ENCODE measurements at regions of chr1 and their contacts with region 1.

Region 1: DNA sequence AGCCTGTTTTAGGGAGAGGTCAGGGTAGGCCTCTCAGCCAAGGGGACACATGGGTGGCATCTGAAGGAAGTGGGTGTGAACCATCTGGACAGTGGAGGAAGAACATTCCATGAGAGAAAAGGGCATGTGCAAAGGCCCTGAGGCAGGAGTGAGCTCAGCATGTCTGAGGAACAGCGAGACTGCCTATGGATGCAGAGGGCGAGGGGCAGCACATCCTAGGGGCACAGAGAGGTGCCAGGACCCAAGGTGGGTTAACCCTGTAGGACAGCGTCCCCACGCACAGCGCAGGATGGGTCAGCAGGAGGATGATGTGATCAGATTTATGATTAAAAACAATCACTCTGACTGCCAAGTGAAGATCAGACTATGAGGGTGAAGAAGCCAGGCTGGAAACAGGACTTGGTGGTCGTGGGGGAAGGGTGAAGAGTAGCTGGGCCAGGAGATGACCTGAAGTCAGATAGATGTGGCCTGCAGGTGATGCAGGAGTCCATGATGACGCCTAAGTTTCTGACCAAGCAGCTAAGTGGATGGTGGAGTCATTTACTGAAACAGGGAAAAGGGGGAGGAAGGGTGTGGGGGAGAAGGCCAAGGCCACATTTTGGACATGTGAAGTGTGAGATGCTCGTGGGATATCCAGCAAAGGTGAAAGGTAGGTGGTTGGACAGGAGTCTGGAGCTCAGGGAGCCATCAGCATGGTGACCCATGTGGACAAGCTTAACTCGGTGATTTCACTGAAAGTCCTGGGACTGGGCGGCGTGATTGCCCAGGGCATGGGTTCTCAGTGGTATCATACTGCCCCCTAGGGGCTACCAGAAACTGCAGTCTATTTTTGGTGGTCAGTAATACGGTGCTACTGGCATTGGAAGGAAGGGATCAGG is 37.8 kb downstream of the PABPC4 start:
- DNase-seq: peak; percentile 49
- ATAC-seq: peak; percentile 99
- H3K4me3 ChIP-seq: no peak overlapping the region
- H3K27ac ChIP-seq: no peak overlapping the region
- H3K4me1 ChIP-seq: peaks cover 0 to 3% of the 10 kb centered on the region in 2 experiments; a peak in 2 of 4 replicates
- H3K27me3 ChIP-seq: no peaks in the 10 kb centered on the region
- CTCF ChIP-seq: peak; percentile 83 to 94 (median 91)
- POLR2A ChIP-seq: no peak
- RAD21 ChIP-seq: peak; percentile 98

Region 2: DNA sequence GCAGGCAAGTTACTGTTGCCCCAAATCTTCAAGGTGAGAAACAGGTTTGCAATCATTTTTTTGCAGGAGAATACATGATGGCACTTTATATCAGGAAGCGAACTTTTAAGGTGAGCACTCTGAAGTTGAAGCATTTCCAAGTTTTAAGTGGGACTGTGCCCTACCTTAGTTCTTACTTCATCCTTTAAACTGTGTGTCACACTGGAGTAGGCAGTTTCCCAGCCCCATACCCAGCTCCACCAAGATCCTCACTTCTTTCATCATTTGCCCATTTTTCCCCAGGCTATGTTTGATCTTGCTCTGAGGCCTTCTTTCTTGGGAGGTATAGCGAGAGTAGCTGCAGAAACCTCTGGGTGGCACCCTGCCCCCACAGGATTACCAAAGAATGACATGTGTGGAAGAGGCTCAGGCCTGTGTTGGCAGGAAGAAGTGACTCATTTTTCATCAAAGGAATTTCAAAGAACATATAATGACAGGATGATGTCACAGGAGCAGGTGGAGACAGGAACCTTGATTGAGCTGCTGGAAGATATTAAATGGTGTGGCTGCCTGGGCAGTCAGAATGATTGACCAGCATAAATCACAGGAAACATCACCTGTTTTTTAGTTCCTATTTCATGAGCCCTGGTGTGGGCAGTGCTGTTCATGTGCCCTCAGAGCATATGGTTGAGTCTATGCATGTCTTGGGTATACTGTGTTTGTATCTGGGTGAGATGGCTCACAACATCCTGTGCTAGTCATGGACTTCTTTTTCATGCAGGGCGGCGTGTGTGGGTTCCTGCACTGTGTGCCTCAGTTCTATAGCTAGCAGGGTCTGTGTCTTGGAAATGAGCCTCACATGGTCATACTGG is 355.1 kb before region 1 on chr1:
- CTCF ChIA-PET with region 1: interaction called, 5 read pairs
- POLR2A ChIA-PET with region 1: no interaction called
- RAD21 ChIA-PET with region 1: interaction called in 1 of 2 experiments, 5 read pairs
- intact Hi-C with region 1: loop called (anchors 5 kb)
- DNase-seq: peak; percentile 96
- ATAC-seq: peak; percentile 91
- H3K4me3 ChIP-seq: peak overlapping the region in 1 of 2 experiments; percentile 18; a peak in 2 of 4 replicates
- H3K27ac ChIP-seq: peak overlapping the region; percentile 55
- H3K4me1 ChIP-seq: peaks cover 48 to 63% of the 10 kb centered on the region in 2 experiments
- H3K27me3 ChIP-seq: no peaks in the 10 kb centered on the region
- CTCF ChIP-seq: peak; percentile 42 to 66 (median 59); a peak in 5 of 6 replicates
- POLR2A ChIP-seq: no peak
- RAD21 ChIP-seq: peak; percentile 80

Region 3: GRCh38 chr1:39258146-39258924 is 280.5 kb before region 1 on chr1:
- CTCF ChIA-PET with region 1: interaction called, 15 read pairs
- POLR2A ChIA-PET with region 1: no interaction called
- RAD21 ChIA-PET with region 1: no interaction called
- intact Hi-C with region 1: loop called (anchors 2 kb)
- DNase-seq: peak; percentile 55
- ATAC-seq: peak; percentile 90
- H3K4me3 ChIP-seq: no peak overlapping the region
- H3K27ac ChIP-seq: no peak overlapping the region
- H3K4me1 ChIP-seq: peaks cover 0 to 3% of the 10 kb centered on the region in 2 experiments; a peak in 1 of 4 replicates
- H3K27me3 ChIP-seq: no peaks in the 10 kb centered on the region
- CTCF ChIP-seq: peak; percentile 84 to 92 (median 92)
- POLR2A ChIP-seq: no peak
- RAD21 ChIP-seq: peak; percentile 98

Region 4: GRCh38 chr1:39268112-39268581 is 270.7 kb before region 1 on chr1:
- CTCF ChIA-PET with region 1: interaction called, 8 read pairs
- POLR2A ChIA-PET with region 1: no interaction called
- RAD21 ChIA-PET with region 1: interaction called in 1 of 2 experiments, 6 read pairs
- intact Hi-C with region 1: loop called (anchors 1 kb)
- DNase-seq: no peak
- ATAC-seq: no peak
- H3K4me3 ChIP-seq: no peak overlapping the region
- H3K27ac ChIP-seq: no peak overlapping the region
- H3K4me1 ChIP-seq: no peaks in the 10 kb centered on the region; a peak in 1 of 4 replicates
- H3K27me3 ChIP-seq: no peaks in the 10 kb centered on the region
- CTCF ChIP-seq: no peak
- POLR2A ChIP-seq: no peak
- RAD21 ChIP-seq: no peak

Region 5: DNA sequence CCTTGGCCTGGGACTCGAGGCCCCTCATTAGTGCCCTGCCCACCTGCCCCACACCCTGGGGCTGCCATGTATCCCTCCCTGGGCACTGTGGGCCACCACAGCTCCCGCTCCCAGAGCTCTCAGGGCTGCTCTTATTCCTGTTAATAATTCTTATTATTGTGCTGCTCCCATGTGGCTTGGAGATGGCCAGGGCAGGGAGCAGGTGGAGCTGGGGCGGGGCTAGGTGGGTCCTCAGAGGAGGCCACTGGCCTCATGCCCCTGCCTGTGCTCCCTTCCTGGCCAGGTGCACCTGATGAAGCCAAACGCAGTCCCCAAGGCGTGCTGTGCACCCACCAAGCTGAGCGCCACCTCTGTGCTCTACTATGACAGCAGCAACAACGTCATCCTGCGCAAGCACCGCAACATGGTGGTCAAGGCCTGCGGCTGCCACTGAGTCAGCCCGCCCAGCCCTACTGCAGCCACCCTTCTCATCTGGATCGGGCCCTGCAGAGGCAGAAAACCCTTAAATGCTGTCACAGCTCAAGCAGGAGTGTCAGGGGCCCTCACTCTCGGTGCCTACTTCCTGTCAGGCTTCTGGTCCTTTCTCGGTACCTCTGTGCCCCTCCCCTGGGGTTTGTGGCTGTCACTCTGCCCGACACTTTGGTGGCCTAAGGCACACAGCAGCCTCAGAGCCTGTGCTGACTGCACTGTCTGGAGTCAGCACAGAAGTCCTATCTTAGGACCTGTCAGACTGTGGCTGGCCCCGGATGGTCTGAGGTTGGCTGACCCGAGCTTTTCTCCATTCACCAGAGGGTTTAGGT is 13.3 kb before region 1 on chr1:
- CTCF ChIA-PET with region 1: no interaction called
- POLR2A ChIA-PET with region 1: no interaction called
- RAD21 ChIA-PET with region 1: no interaction called
- intact Hi-C with region 1: no loop called
- DNase-seq: no peak
- ATAC-seq: no peak
- H3K4me3 ChIP-seq: no peak overlapping the region
- H3K27ac ChIP-seq: no peak overlapping the region
- H3K4me1 ChIP-seq: no peaks in the 10 kb centered on the region
- H3K27me3 ChIP-seq: no peaks in the 10 kb centered on the region
- CTCF ChIP-seq: no peak
- POLR2A ChIP-seq: no peak
- RAD21 ChIP-seq: no peak

Measured in HCT116 (cell line).